ENCODE measurements at regions of chr2 and their contacts with region 1.

Region 1: GRCh38 chr2:12716282-12717190 is at the start of gene TRIB2:
- DNase-seq: peak; percentile 69 to 95
- H3K4me3 ChIP-seq: peak within 1 kb of the TSS; percentile 80 to 91
- H3K27ac ChIP-seq: peak within 1 kb of the TSS; percentile 92 to 95
- H3K4me1 ChIP-seq: peaks cover 12 to 25% of the 10 kb centered on the region in 2 donors
- H3K27me3 ChIP-seq: no peaks in the 10 kb centered on the region
- CTCF ChIP-seq: peak in 1 of 3 experiments; percentile 3
- total RNA-seq, gene TRIB2: 55.6 TPM

Region 2: GRCh38 chr2:11389551-11390528 is 1326.7 kb before region 1 on chr2:
- intact Hi-C with region 1: loop called (anchors 10 kb)
- DNase-seq: no peak
- H3K4me3 ChIP-seq: no peak overlapping the region
- H3K27ac ChIP-seq: peak overlapping the region; percentile 20 to 45
- H3K4me1 ChIP-seq: peaks cover 7 to 33% of the 10 kb centered on the region in 2 donors
- H3K27me3 ChIP-seq: no peaks in the 10 kb centered on the region
- CTCF ChIP-seq: no peak

Region 3: GRCh38 chr2:11863513-11864328 is 852.8 kb before region 1 on chr2:
- intact Hi-C with region 1: loop called (anchors 2 kb)
- DNase-seq: peak; percentile 63 to 94
- H3K4me3 ChIP-seq: peak overlapping the region; percentile 7 to 39
- H3K27ac ChIP-seq: peak overlapping the region in 1 of 2 donors; percentile 43
- H3K4me1 ChIP-seq: peaks cover 0 to 6% of the 10 kb centered on the region in 2 donors
- H3K27me3 ChIP-seq: no peaks in the 10 kb centered on the region
- CTCF ChIP-seq: peak; percentile 82 to 93 (median 91)

Region 4: GRCh38 chr2:12314127-12314735 is 402.3 kb before region 1 on chr2:
- intact Hi-C with region 1: no loop called
- DNase-seq: no peak
- H3K4me3 ChIP-seq: no peak overlapping the region
- H3K27ac ChIP-seq: no peak overlapping the region
- H3K4me1 ChIP-seq: peaks cover 5 to 7% of the 10 kb centered on the region in 2 donors
- H3K27me3 ChIP-seq: no peaks in the 10 kb centered on the region
- CTCF ChIP-seq: no peak

Region 5: GRCh38 chr2:12456293-12457151 is 260.0 kb before region 1 on chr2:
- intact Hi-C with region 1: loop called (anchors 2 kb)
- DNase-seq: peak; percentile 68 to 96
- H3K4me3 ChIP-seq: peak overlapping the region in 1 of 2 donors; percentile 10
- H3K27ac ChIP-seq: peak overlapping the region; percentile 8 to 51
- H3K4me1 ChIP-seq: peaks cover 3 to 13% of the 10 kb centered on the region in 2 donors
- H3K27me3 ChIP-seq: no peaks in the 10 kb centered on the region
- CTCF ChIP-seq: no peak

Region 6: GRCh38 chr2:12555012-12555645 is 161.4 kb before region 1 on chr2:
- intact Hi-C with region 1: loop called (anchors 5 kb)
- DNase-seq: no peak
- H3K4me3 ChIP-seq: no peak overlapping the region
- H3K27ac ChIP-seq: peak overlapping the region; percentile 41 to 47
- H3K4me1 ChIP-seq: peaks cover 0 to 12% of the 10 kb centered on the region in 2 donors
- H3K27me3 ChIP-seq: no peaks in the 10 kb centered on the region
- CTCF ChIP-seq: peak in 1 of 3 experiments; percentile 26

Region 7: DNA sequence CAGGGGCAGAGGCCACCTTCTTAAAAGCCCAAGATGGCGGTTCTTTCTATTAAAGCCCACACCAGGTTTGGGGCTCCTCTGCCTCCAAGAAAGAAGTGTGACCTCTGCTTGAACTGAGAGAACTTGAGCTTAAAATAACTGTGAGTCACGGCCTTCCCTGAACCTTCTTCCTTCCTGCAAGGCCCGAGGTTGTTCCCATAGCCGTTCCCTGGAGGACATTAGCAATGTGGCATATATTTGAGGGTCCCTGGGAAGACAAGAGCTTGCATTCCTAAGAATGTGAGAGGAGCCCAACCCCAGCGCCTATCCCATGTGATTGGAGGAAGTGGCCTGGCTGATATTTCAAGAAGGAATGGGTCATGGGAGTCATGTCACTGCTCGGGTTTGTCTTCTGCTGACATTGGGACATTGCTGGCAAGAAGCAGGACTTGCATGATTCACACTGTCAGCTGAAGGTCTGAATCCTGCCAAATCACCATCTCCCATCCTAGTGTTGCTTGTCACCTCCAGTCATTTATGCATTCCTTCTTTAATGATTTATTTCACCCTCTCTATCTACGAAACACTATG is 168.3 kb after region 1 on chr2:
- intact Hi-C with region 1: no loop called
- DNase-seq: peak in 1 of 2 donors; percentile 80
- H3K4me3 ChIP-seq: no peak overlapping the region
- H3K27ac ChIP-seq: no peak overlapping the region
- H3K4me1 ChIP-seq: no peaks in the 10 kb centered on the region
- H3K27me3 ChIP-seq: no peaks in the 10 kb centered on the region
- CTCF ChIP-seq: no peak

Region 8: DNA sequence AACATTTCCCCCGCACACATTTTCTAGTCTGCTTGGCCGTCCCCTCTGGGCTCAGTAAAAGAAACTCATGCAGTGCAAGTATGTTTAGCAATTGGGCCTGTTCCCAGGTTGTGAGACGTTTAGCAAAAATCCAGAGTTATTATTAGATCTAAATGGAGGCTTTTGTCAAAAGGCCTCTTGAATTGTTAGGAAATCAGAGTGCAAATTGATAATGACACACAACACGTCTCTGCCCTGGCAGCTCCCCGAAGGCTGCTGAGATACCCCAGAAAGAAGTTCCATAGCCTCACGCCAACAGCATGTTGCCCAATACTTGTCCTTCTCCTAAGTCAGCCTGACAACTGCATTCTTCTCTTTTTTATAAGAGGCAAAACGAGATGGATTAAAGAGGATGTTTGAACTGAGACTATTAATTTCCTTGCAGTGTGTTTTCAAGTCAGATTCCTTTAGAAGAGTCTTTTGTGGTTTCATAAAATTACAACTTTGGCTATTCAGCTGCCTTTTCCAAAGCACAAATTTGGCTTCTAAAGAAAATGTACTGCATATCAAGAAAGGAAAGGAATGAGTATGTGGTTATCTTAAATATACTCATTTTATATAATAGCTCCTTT is 202.4 kb after region 1 on chr2:
- intact Hi-C with region 1: loop called (anchors 2 kb)
- DNase-seq: peak in 1 of 2 donors; percentile 83
- H3K4me3 ChIP-seq: peak overlapping the region in 1 of 2 donors; percentile 24
- H3K27ac ChIP-seq: peak overlapping the region; percentile 78 to 87
- H3K4me1 ChIP-seq: peaks cover 0 to 10% of the 10 kb centered on the region in 2 donors
- H3K27me3 ChIP-seq: no peaks in the 10 kb centered on the region
- CTCF ChIP-seq: no peak